ENCODE measurements at regions of chr15 and their contacts with region 1.

Region 1: GRCh38 chr15:34122771-34123183 is 20.9 kb downstream of the PGBD4 start:
- DNase-seq: peak; percentile 97
- ATAC-seq: peak; percentile 96
- H3K4me3 ChIP-seq: no peak overlapping the region
- H3K27ac ChIP-seq: no peak overlapping the region
- H3K4me1 ChIP-seq: 0 out of 2 replicates have a peak, but pooled peaks cover 1% of the 10 kb centered on the region
- H3K27me3 ChIP-seq: no peaks in the 10 kb centered on the region
- CTCF ChIP-seq: no peak
- POLR2A ChIP-seq: no peak
- RAD21 ChIP-seq: no peak

Region 2: GRCh38 chr15:34065941-34066340 is 56.8 kb before region 1 on chr15:
- CTCF ChIA-PET with region 1: no interaction called
- POLR2A ChIA-PET with region 1: no interaction called
- dilution Hi-C with region 1: no loop called
- in situ Hi-C with region 1: no loop called
- intact Hi-C with region 1: no loop called
- DNase-seq: no peak
- ATAC-seq: no peak
- H3K4me3 ChIP-seq: no peak overlapping the region
- H3K27ac ChIP-seq: no peak overlapping the region
- H3K4me1 ChIP-seq: no peaks in the 10 kb centered on the region
- H3K27me3 ChIP-seq: no peaks in the 10 kb centered on the region
- CTCF ChIP-seq: no peak
- POLR2A ChIP-seq: no peak
- RAD21 ChIP-seq: no peak

Region 3: GRCh38 chr15:34132881-34133280 is 10.1 kb after region 1 on chr15:
- CTCF ChIA-PET with region 1: interaction called, 3 read pairs
- POLR2A ChIA-PET with region 1: no interaction called
- dilution Hi-C with region 1: no loop called
- in situ Hi-C with region 1: no loop called
- intact Hi-C with region 1: loop called (anchors 1 kb)
- DNase-seq: peak; percentile 53
- ATAC-seq: peak; percentile 46
- H3K4me3 ChIP-seq: no peak overlapping the region
- H3K27ac ChIP-seq: no peak overlapping the region
- H3K4me1 ChIP-seq: no peaks in the 10 kb centered on the region
- H3K27me3 ChIP-seq: no peaks in the 10 kb centered on the region
- CTCF ChIP-seq: no peak
- POLR2A ChIP-seq: no peak
- RAD21 ChIP-seq: no peak

Region 4: DNA sequence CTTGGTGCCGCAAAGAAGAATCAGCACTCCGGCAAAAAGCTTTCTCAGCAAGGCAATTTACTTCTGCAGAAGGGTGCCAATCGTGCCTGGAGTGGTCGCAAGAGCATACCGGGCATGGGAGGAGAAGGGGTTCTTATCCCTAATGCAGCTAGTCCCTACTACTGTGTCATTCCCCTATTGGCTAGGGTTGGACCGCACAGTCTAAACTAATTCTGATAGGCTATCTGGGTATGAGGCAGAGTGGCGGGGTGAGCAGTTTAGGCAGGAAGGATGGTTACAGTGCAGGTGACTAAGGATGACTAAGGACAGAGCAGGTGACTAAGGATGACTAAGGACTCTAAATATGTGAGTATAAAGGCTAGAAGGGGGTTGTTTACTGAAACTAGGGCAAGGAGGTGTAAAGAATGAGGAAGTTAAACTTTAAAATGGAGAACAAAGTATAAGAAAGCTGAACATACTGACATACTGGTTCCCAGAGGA is 32.0 kb after region 1 on chr15:
- CTCF ChIA-PET with region 1: no interaction called
- POLR2A ChIA-PET with region 1: no interaction called
- dilution Hi-C with region 1: no loop called
- in situ Hi-C with region 1: no loop called
- intact Hi-C with region 1: no loop called
- DNase-seq: peak; percentile 49
- ATAC-seq: no peak
- H3K4me3 ChIP-seq: no peak overlapping the region
- H3K27ac ChIP-seq: no peak overlapping the region
- H3K4me1 ChIP-seq: no peaks in the 10 kb centered on the region
- H3K27me3 ChIP-seq: no peaks in the 10 kb centered on the region
- CTCF ChIP-seq: no peak
- POLR2A ChIP-seq: no peak
- RAD21 ChIP-seq: no peak